Prostate gland (tissue), 2 donors: ENCODE measurements at regions of chr3 and their contacts with region 1.

Region 1: GRCh38 chr3:122942937-122943827 is 84.4 kb downstream of the SEMA5B start:
- DNase-seq: peak; percentile 71
- H3K4me3 ChIP-seq: no peak overlapping the region
- H3K27ac ChIP-seq: no peak overlapping the region
- H3K4me1 ChIP-seq: no peaks in the 10 kb centered on the region
- H3K27me3 ChIP-seq: no peaks in the 10 kb centered on the region
- CTCF ChIP-seq: peak; percentile 77 to 94 (median 92)
- POLR2A ChIP-seq: no peak

Region 2: DNA sequence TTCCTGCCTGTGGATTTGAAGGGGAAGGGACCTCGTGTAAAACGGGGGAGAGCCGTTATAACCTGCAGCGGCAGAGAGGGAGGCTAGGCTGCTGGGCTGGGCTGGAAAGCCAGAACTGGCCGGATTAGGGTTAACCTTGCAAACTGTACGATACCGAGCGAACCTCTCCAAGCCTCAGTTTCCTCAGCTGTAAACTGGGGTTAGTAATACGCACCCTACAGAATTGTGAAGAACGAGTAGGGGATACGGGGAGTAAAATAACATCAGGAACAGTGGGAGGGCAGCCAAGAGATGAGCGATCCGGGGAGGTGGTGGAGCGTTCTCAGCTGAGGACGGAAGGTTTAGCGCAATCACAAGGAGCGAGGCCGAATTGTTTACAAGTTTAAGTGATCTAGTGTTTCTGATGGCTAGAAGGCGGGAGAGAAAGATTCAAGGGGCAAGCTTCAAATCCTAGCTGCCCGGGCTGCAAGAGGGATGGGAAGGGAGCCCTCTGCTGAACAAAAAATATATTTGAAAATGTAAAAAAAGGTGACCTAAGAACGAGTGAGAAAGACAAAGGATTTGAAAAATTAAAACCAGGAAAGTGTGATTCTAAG is 85.1 kb after region 1 on chr3:
- intact Hi-C with region 1: loop called (anchors 5 kb)
- DNase-seq: peak; percentile 25
- H3K4me3 ChIP-seq: peak overlapping the region; percentile 26 to 45
- H3K27ac ChIP-seq: no peak overlapping the region
- H3K4me1 ChIP-seq: no peaks in the 10 kb centered on the region
- H3K27me3 ChIP-seq: no peaks in the 10 kb centered on the region
- CTCF ChIP-seq: peak in 2 of 4 experiments; percentile 51 to 60
- POLR2A ChIP-seq: no peak

Region 3: DNA sequence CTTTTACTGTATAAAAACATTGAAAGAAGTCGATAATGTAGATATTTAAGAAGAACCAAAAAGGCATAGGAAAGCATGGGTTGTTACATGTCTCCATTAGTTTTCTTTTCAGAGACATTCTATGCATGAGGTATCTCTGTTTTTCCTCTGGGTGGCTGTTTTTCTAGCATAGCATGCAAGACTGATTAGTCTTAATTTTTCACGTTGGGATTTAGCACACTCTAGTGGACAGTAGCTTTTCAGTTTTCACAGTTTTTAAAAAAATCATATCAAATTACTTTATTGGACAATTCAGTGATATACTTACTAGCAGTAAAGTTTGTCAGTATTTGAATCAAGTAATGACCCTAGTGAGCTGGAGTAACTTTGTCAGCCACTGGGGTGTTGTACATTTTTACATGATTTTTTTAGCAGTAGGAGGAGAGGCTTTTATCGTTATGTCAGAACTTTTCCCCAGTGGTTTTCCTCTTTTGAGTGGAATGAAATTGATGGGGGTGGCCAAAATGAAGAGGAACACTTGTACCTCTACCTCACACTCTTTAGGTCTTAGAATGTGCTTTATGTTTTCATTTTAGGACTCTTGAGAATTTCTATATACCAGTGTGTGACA is 315.7 kb after region 1 on chr3:
- intact Hi-C with region 1: loop called (anchors 2 kb)
- DNase-seq: no peak
- H3K4me3 ChIP-seq: no peak overlapping the region
- H3K27ac ChIP-seq: no peak overlapping the region
- H3K4me1 ChIP-seq: no peaks in the 10 kb centered on the region
- H3K27me3 ChIP-seq: no peaks in the 10 kb centered on the region
- CTCF ChIP-seq: peak in 3 of 4 experiments; percentile 52 to 80 (median 79)
- POLR2A ChIP-seq: no peak

Region 4: DNA sequence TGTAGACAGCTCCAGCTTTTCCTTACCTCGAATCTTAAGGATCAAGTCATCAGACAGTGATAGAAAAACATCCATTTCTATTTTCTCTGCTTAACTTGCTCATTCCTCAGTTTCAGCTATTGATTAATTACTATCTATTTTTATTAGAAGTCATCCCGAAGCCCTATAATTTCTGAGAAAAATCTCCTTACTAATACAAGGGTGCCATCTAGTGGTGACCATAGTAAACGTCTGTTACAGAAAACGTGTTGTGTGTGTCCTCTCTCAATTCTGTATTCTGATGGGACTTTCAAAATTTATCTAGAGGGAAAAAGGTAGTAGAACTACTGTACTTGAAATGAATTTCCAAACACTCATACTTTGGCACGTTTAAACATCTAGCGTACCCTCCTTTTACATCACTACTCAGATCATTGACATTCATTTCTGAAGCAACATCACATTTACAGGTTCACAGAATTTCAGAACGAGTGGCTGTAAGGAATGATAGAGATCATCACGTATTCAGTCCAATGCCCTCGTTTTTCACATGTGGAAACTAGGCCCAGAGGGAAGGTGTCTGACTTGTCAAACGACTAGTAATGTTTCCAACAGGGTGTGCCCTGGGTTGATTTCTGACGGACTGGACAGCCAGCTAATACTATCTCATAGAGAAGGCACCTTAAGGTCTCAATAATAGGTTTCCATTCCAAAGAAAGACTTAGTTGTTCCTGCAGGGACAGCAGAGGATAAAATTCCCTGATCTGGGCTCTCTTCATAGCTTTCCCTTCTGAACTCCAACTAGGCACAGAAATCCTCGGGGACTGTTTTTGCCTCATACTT is 616.1 kb after region 1 on chr3:
- intact Hi-C with region 1: loop called (anchors 10 kb)
- DNase-seq: peak; percentile 34
- H3K4me3 ChIP-seq: no peak overlapping the region
- H3K27ac ChIP-seq: no peak overlapping the region
- H3K4me1 ChIP-seq: no peaks in the 10 kb centered on the region
- H3K27me3 ChIP-seq: no peaks in the 10 kb centered on the region
- CTCF ChIP-seq: peak; percentile 25 to 78 (median 74)
- POLR2A ChIP-seq: no peak